ENCODE measurements at regions of chr18 and their contacts with region 1.

Region 1: GRCh38 chr18:36572135-36572856 is 256.5 kb downstream of the TPGS2 start:
- DNase-seq: peak; percentile 19
- ATAC-seq: peak; percentile 83
- H3K4me3 ChIP-seq: no peak overlapping the region
- H3K27ac ChIP-seq: no peak overlapping the region
- H3K4me1 ChIP-seq: no peaks in the 10 kb centered on the region
- H3K27me3 ChIP-seq: peaks cover 0 to 3% of the 10 kb centered on the region in 2 experiments; a peak in 2 of 5 replicates
- CTCF ChIP-seq: peak; percentile 70
- EP300 ChIP-seq: no peak
- POLR2A ChIP-seq: no peak
- RAD21 ChIP-seq: 0 out of 2 replicates have a peak, but pooled peaks have one; percentile 38

Region 2: DNA sequence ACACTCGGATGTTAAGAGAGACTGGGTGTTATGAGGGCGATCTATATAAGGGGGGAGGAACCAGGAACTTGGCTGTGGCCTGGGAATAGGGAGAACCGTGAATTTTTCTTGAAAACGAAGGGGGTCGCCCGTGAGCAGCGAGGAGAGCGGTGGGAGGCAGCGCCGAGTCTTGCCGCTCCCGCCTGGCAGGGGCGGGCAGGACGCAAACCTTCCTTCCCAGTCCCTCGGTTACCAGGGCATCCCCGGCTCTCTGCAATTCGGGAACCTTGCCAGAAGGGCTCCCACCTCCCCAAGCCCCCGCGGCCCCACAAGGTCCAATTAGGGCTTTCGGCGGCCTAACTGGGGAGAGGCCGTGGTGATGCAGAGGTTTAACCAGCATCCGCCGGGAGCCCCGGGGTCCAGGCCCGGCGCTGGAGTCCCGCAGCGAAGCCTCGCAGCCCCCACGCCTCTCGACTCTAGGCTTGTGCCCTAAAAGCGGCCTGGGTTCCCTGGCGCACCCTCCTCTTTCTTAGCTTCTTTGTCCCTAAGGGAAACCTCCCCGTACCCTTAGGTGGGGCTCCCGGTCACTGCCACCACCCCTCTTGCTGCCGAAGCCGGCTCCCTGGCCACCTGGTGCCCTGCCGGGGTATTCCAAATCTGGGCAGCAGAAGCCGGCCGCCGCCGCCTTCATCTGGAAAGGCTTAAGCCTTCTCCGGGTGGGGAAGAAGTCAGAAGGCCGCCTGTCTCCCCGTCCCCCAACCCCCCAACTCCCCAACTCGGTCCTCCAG is 275.5 kb before region 1 on chr18:
- CTCF ChIA-PET with region 1: interaction called, 4 read pairs
- POLR2A ChIA-PET with region 1: no interaction called
- in situ Hi-C with region 1: loop called (anchors 10 kb)
- intact Hi-C with region 1: loop called (anchors 5 kb)
- DNase-seq: peak; percentile 32
- ATAC-seq: peak; percentile 86
- H3K4me3 ChIP-seq: peak overlapping the region; percentile 47 to 67 (median 52); a peak in 5 of 6 replicates
- H3K27ac ChIP-seq: no peak overlapping the region
- H3K4me1 ChIP-seq: peaks cover 9% of the 10 kb centered on the region; the same call in 1 of the 2 replicates
- H3K27me3 ChIP-seq: peaks cover 0 to 50% of the 10 kb centered on the region in 2 experiments; a peak in 4 of 5 replicates
- CTCF ChIP-seq: peak; percentile 76
- EP300 ChIP-seq: no peak
- POLR2A ChIP-seq: no peak
- RAD21 ChIP-seq: no peak

Region 3: DNA sequence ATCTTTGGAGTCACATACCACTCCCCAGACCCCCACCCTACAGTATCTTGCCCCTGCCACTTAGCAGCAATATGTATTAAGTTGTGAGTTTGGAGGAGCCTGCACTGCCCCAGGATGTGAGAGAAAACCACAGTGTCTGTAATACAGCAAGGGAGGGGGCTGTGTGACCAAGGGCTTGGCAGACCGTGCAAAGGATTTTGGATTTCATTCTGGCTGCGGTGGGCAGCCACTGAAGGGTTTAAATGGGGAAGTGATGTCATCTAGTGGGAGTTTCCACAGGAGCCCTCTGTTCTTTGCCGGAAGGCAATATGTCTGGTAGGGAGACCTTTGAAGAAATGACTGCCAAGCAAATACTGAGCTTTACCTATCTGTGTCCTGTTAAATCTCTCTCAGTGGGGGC is 72.4 kb before region 1 on chr18:
- CTCF ChIA-PET with region 1: no interaction called
- POLR2A ChIA-PET with region 1: no interaction called
- in situ Hi-C with region 1: no loop called
- intact Hi-C with region 1: loop called (anchors 2 kb)
- DNase-seq: no peak
- ATAC-seq: no peak
- H3K4me3 ChIP-seq: no peak overlapping the region
- H3K27ac ChIP-seq: no peak overlapping the region
- H3K4me1 ChIP-seq: no peaks in the 10 kb centered on the region
- H3K27me3 ChIP-seq: no peaks in the 10 kb centered on the region
- CTCF ChIP-seq: no peak
- EP300 ChIP-seq: no peak
- POLR2A ChIP-seq: no peak
- RAD21 ChIP-seq: no peak

Measured in HepG2 (cell line).